Ascending aorta (tissue), 2 donors: ENCODE measurements at regions of chr13 and their contacts with region 1.

Region 1: DNA sequence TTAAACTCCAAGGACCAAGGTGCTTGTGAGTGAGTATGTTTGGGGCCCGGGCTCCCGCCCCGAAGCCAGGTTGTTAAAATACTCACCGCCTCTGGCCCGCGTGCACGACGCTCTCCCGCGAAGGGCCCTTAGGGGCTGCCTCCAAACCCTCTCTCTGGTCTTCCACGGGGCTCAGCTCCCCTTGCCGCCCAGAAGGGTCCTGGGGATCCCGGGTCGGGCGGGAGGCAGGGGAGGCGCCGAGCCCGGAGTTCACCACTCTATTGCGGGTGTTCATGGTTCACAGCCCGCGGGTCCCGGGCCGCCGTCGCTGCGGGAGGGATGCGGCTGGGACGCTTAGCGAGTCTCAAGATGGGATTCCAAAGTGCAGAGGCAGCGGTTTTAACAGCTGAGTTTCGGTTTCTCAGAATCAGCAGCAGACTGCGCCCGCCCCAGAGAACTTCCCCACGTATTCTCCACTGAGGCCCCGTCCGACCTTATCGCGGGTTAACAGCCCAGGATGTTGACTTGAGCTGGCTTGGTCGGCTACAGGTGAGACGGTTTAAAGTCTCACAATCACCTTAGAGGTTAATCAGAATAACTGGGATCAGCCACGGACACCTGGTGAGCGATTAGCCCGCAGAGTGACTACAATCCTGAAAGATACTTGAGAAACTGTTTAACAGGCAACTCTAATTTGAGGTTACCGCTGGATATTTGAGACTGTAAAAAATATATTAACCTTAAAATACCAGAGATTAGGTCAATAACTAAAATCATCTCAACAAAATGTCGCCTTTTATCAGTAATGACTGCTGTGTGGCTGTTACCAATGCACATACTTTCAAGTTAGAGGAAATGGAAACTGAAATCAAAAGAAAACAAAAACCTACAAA is at the start of gene EPSTI1:
- DNase-seq: peak in 1 of 2 donors; percentile 80
- H3K4me3 ChIP-seq: peak within 1 kb of the TSS; percentile 71 to 83
- H3K27ac ChIP-seq: peak within 1 kb of the TSS; percentile 42 to 70
- H3K4me1 ChIP-seq: peaks cover 0 to 2% of the 10 kb centered on the region in 2 donors
- H3K27me3 ChIP-seq: no peaks in the 10 kb centered on the region
- CTCF ChIP-seq: no peak
- total RNA-seq, gene EPSTI1: 3.2 TPM

Region 2: GRCh38 chr13:43023289-43023951 is 31.3 kb after region 1 on chr13 and contains the start of gene DNAJC15:
- intact Hi-C with region 1: loop called (anchors 1 kb)
- DNase-seq: peak; percentile 36 to 88
- H3K4me3 ChIP-seq: peak within 1 kb of the TSS; percentile 69 to 80
- H3K27ac ChIP-seq: peak within 1 kb of the TSS; percentile 80 to 82
- H3K4me1 ChIP-seq: peaks cover 0 to 3% of the 10 kb centered on the region in 2 donors
- H3K27me3 ChIP-seq: no peaks in the 10 kb centered on the region
- CTCF ChIP-seq: peak in 1 of 3 experiments; percentile 23
- total RNA-seq, gene DNAJC15: 2.3 TPM

Region 3: DNA sequence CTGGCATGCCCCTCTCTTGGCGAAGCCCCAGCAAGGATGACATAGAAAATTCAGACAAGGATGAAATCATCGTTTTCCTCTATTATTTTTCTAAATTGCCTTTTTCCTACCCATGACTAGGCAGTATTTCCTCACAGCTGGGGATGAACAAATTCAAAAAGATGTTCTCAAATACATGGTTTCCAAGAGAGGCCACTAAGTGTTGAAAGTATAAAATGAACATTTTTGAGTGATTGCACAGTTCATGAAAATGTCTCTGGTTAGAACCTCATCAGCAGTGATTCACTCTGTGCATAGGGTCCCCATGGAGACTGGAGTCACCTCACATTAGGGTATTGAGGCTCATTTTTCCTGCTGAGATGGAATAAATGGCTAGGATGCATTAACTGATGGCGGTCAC is 405.0 kb after region 1 on chr13:
- intact Hi-C with region 1: no loop called
- DNase-seq: no peak
- H3K4me3 ChIP-seq: no peak overlapping the region
- H3K27ac ChIP-seq: no peak overlapping the region
- H3K4me1 ChIP-seq: no peaks in the 10 kb centered on the region
- H3K27me3 ChIP-seq: no peaks in the 10 kb centered on the region
- CTCF ChIP-seq: no peak